Right ventricle myocardium superior (tissue), 1 donor: ENCODE measurements at regions of chr13 and their contacts with region 1.

Region 1: GRCh38 chr13:23466144-23467002 is 32.9 kb upstream of the SACS start:
- DNase-seq: peak; percentile 82
- ATAC-seq: peak; percentile 97

Region 2: GRCh38 chr13:22866221-22866620 is 600.2 kb before region 1 on chr13:
- intact Hi-C with region 1: no loop called
- DNase-seq: no peak
- ATAC-seq: no peak

Region 3: GRCh38 chr13:23570099-23570920 is 103.9 kb after region 1 on chr13 and contains the start of gene TNFRSF19:
- intact Hi-C with region 1: loop called (anchors 5 kb)
- DNase-seq: peak; percentile 56
- ATAC-seq: peak; percentile 90
- total RNA-seq, gene TNFRSF19: 30.2 TPM

Region 4: GRCh38 chr13:23871616-23872220 is 405.3 kb after region 1 on chr13:
- intact Hi-C with region 1: loop called (anchors 2 kb)
- DNase-seq: no peak
- ATAC-seq: peak; percentile 59